HCT116 (cell line): ENCODE measurements at regions of chr2 and their contacts with region 1.

Region 1: GRCh38 chr2:169109502-169110409 is 40.4 kb downstream of the DHRS9 start:
- DNase-seq: peak; percentile 67
- ATAC-seq: peak; percentile 99
- H3K4me3 ChIP-seq: no peak overlapping the region
- H3K27ac ChIP-seq: no peak overlapping the region
- H3K4me1 ChIP-seq: peaks cover 0 to 8% of the 10 kb centered on the region in 2 experiments; a peak in 1 of 4 replicates
- H3K27me3 ChIP-seq: peaks cover 5% of the 10 kb centered on the region; the same call in 1 of the 2 replicates
- CTCF ChIP-seq: peak; percentile 84 to 97 (median 88)
- POLR2A ChIP-seq: no peak
- RAD21 ChIP-seq: peak; percentile 92

Region 2: DNA sequence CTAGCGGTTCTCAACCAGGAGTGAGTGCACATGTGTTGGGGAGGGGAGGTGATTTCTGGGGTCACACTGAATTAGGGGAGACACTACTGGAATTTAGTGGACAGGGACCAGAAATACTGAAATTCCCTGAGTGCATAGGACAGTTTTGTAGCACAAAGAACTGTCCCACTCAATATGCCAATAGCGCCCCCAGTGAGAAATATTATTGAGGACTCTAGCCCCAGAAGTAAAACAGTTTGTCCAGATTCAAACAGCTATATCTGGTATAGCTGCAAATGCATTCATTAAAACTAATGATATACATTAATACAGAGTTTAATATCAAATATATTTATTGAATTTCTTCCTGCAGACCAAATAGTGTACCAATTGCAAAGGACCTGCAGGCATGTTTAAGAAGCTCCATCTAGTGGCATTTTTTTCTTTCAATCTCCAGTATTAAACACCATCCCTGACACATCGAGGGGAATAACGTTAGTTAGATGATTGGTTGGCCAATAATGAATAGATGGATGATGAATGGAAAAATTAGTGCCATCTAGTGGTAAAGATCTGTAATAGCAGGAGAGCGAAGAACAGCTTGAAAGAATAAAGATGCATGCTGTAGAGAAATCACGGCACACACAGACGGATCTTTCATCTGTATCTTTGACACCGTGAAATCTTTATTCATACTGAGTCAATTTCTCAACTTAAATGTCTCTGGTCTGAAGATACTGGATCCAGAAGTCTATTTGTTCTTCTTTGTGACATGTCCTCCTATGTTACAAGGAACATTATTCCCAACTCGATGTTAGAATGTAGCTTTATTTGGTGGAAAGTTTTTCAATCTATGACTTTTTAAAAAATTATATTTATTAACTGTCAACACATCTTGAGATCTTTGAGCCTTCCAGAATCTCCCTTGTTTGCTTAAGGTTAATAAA is 22.1 kb after region 1 on chr2:
- CTCF ChIA-PET with region 1: interaction called, 18 read pairs
- POLR2A ChIA-PET with region 1: no interaction called
- RAD21 ChIA-PET with region 1: interaction called, 3 to 4 read pairs
- intact Hi-C with region 1: loop called (anchors 1 kb)
- DNase-seq: peak; percentile 77
- ATAC-seq: peak; percentile 98
- H3K4me3 ChIP-seq: no peak overlapping the region
- H3K27ac ChIP-seq: no peak overlapping the region
- H3K4me1 ChIP-seq: 0 out of 4 replicates have a peak, but pooled peaks cover 0 to 2% of the 10 kb centered on the region in 2 experiments
- H3K27me3 ChIP-seq: no peaks in the 10 kb centered on the region
- CTCF ChIP-seq: peak; percentile 69 to 98 (median 79)
- POLR2A ChIP-seq: no peak
- RAD21 ChIP-seq: peak; percentile 68

Region 3: DNA sequence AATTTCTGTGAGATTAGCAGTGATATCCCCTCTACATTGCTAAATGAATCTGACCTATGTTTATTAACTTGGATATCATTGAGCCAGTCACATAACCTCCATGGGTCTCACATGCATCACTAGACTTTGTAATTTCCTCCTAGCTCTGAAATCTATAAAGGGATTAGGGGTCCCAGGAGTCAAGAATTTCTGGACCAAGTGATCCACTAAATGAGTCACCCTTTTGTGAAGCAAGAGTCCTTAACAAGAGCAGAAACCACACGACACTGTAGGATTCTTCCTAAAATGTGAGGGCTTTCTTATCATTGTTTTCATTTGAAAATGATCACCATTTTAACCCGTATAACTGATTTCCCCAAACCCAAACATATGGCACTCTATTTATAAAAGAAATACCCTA is 49.9 kb after region 1 on chr2:
- CTCF ChIA-PET with region 1: no interaction called
- POLR2A ChIA-PET with region 1: no interaction called
- RAD21 ChIA-PET with region 1: no interaction called
- intact Hi-C with region 1: no loop called
- DNase-seq: no peak
- ATAC-seq: no peak
- H3K4me3 ChIP-seq: no peak overlapping the region
- H3K27ac ChIP-seq: no peak overlapping the region
- H3K4me1 ChIP-seq: no peaks in the 10 kb centered on the region
- H3K27me3 ChIP-seq: no peaks in the 10 kb centered on the region
- CTCF ChIP-seq: no peak
- POLR2A ChIP-seq: no peak
- RAD21 ChIP-seq: no peak

Region 4: DNA sequence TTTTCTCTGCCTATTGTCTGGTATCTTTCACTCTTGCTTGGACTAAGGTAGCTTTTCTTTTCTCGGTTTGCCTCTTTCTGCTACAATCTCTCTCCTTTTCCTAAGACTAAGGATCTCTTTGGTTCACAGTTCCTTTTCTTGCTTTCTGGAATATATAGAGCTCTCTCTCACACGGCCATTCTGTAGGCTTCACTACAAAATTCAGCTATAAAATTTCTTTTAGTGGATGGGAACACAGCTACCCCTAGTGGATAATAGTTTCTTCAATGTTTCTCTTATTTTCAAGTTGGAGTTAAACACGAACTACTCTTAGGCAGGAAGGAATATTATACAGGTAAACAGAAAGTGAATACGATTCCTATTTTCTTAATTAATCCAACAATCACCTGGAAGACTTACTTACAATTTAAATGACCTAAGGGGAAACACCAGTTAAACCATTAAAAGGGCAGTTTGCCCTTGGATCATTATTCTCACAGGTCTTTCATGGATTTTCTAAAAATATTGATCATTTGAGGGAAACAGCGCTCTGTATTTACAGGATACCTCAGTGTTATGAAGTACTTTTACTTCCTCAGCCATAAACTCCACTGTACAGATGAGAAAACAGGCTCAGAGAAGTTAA is 112.1 kb after region 1 on chr2:
- CTCF ChIA-PET with region 1: interaction called, 29 read pairs
- POLR2A ChIA-PET with region 1: interaction called, 4 read pairs
- RAD21 ChIA-PET with region 1: interaction called, 3 read pairs
- intact Hi-C with region 1: loop called (anchors 2 kb)
- DNase-seq: peak; percentile 24
- ATAC-seq: peak; percentile 86
- H3K4me3 ChIP-seq: peak overlapping the region in 1 of 2 experiments; percentile 13; a peak in 1 of 4 replicates
- H3K27ac ChIP-seq: no peak overlapping the region
- H3K4me1 ChIP-seq: peaks cover 0 to 4% of the 10 kb centered on the region in 2 experiments; a peak in 1 of 4 replicates
- H3K27me3 ChIP-seq: no peaks in the 10 kb centered on the region
- CTCF ChIP-seq: peak; percentile 49 to 74 (median 63); a peak in 5 of 6 replicates
- POLR2A ChIP-seq: no peak
- RAD21 ChIP-seq: peak; percentile 74

Region 5: GRCh38 chr2:169397697-169398096 is 287.9 kb after region 1 on chr2:
- CTCF ChIA-PET with region 1: interaction called, 31 read pairs
- POLR2A ChIA-PET with region 1: no interaction called
- RAD21 ChIA-PET with region 1: no interaction called
- intact Hi-C with region 1: loop called (anchors 1 kb)
- DNase-seq: peak; percentile 3
- ATAC-seq: no peak
- H3K4me3 ChIP-seq: no peak overlapping the region
- H3K27ac ChIP-seq: no peak overlapping the region
- H3K4me1 ChIP-seq: no peaks in the 10 kb centered on the region; a peak in 1 of 4 replicates
- H3K27me3 ChIP-seq: no peaks in the 10 kb centered on the region
- CTCF ChIP-seq: peak; percentile 18 to 48 (median 47); a peak in 4 of 6 replicates
- POLR2A ChIP-seq: no peak
- RAD21 ChIP-seq: peak; percentile 72

Region 6: GRCh38 chr2:169933124-169933711 is 823.5 kb after region 1 on chr2:
- CTCF ChIA-PET with region 1: no interaction called
- POLR2A ChIA-PET with region 1: no interaction called
- RAD21 ChIA-PET with region 1: no interaction called
- intact Hi-C with region 1: loop called (anchors 5 kb)
- DNase-seq: peak; percentile 22
- ATAC-seq: peak; percentile 58
- H3K4me3 ChIP-seq: no peak overlapping the region
- H3K27ac ChIP-seq: no peak overlapping the region
- H3K4me1 ChIP-seq: no peaks in the 10 kb centered on the region
- H3K27me3 ChIP-seq: no peaks in the 10 kb centered on the region
- CTCF ChIP-seq: peak; percentile 43 to 60 (median 51); a peak in 5 of 6 replicates
- POLR2A ChIP-seq: no peak
- RAD21 ChIP-seq: peak; percentile 74